WTC11 (cell line): ENCODE measurements at regions of chr19 and their contacts with region 1.

Region 1: GRCh38 chr19:57651654-57651996 is 17.1 kb upstream of the ZSCAN4 start:
- DNase-seq: no peak
- ATAC-seq: peak; percentile 79
- H3K4me3 Mint-ChIP-seq: peak overlapping the region; percentile 59
- H3K27ac Mint-ChIP-seq: peak overlapping the region; percentile 61
- H3K4me1 Mint-ChIP-seq: peaks cover 14% of the 10 kb centered on the region
- H3K27me3 Mint-ChIP-seq: peaks cover 39% of the 10 kb centered on the region
- CTCF ChIP-seq: no peak

Region 2: GRCh38 chr19:57620673-57621199 is 30.9 kb before region 1 on chr19:
- CTCF ChIA-PET with region 1: no interaction called
- POLR2A ChIA-PET with region 1: no interaction called
- DNase-seq: no peak
- ATAC-seq: no peak
- H3K4me3 Mint-ChIP-seq: no peak overlapping the region
- H3K27ac Mint-ChIP-seq: no peak overlapping the region
- H3K4me1 Mint-ChIP-seq: peaks cover under 1% of the 10 kb centered on the region
- H3K27me3 Mint-ChIP-seq: peaks cover 12% of the 10 kb centered on the region
- CTCF ChIP-seq: no peak

Region 3: GRCh38 chr19:57664269-57665127 is 12.9 kb after region 1 on chr19:
- CTCF ChIA-PET with region 1: interaction called, 17 read pairs
- POLR2A ChIA-PET with region 1: interaction called, 4 read pairs
- DNase-seq: peak; percentile 67
- ATAC-seq: peak; percentile 85
- H3K4me3 Mint-ChIP-seq: peak overlapping the region; percentile 86
- H3K27ac Mint-ChIP-seq: no peak overlapping the region
- H3K4me1 Mint-ChIP-seq: peaks cover 15% of the 10 kb centered on the region
- H3K27me3 Mint-ChIP-seq: peaks cover 20% of the 10 kb centered on the region
- CTCF ChIP-seq: no peak

Region 4: GRCh38 chr19:57746580-57747471 is 95.2 kb after region 1 on chr19 and contains the start of gene ZNF776:
- CTCF ChIA-PET with region 1: no interaction called
- POLR2A ChIA-PET with region 1: no interaction called
- DNase-seq: peak; percentile 78
- ATAC-seq: peak; percentile 96
- H3K4me3 Mint-ChIP-seq: peak within 1 kb of the TSS; percentile 99
- H3K27ac Mint-ChIP-seq: peak within 1 kb of the TSS; percentile 98
- H3K4me1 Mint-ChIP-seq: peaks cover 10% of the 10 kb centered on the region
- H3K27me3 Mint-ChIP-seq: peaks cover 4% of the 10 kb centered on the region
- CTCF ChIP-seq: no peak
- total RNA-seq, gene ZNF776: 14.3 to 16.9 TPM (median 16.4 TPM) in 3 replicates